Gastrocnemius medialis (tissue), 4 donors: ENCODE measurements at regions of chr6 and their contacts with region 1.

Region 1: DNA sequence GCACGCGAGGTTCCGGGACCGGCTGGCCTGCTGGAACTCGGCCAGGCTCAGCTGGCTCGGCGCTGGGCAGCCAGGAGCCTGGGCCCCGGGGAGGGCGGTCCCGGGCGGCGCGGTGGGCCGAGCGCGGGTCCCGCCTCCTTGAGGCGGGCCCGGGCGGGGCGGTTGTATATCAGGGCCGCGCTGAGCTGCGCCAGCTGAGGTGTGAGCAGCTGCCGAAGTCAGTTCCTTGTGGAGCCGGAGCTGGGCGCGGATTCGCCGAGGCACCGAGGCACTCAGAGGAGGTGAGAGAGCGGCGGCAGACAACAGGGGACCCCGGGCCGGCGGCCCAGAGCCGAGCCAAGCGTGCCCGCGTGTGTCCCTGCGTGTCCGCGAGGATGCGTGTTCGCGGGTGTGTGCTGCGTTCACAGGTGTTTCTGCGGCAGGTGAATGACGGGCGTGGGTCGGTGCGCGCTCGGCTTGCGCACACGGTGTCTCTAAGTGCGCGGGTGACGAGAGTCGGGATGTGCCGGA is at the start of gene CDKN1A:
- DNase-seq: peak; percentile 86 to 94
- ATAC-seq: peak; percentile 38 to 61
- H3K4me3 ChIP-seq: peak within 1 kb of the TSS; percentile 91 to 97 (median 93)
- H3K27ac ChIP-seq: peak within 1 kb of the TSS; percentile 99 to 100 (median 100)
- H3K4me1 ChIP-seq: peaks cover 26 to 37% of the 10 kb centered on the region in 2 donors
- H3K27me3 ChIP-seq: no peaks in the 10 kb centered on the region
- CTCF ChIP-seq: peak in 3 of 5 experiments; percentile 21 to 45 (median 28)
- POLR2A ChIP-seq: peak; percentile 99 to 100
- total RNA-seq, gene CDKN1A: 110 to 346 (median 260) TPM

Region 2: DNA sequence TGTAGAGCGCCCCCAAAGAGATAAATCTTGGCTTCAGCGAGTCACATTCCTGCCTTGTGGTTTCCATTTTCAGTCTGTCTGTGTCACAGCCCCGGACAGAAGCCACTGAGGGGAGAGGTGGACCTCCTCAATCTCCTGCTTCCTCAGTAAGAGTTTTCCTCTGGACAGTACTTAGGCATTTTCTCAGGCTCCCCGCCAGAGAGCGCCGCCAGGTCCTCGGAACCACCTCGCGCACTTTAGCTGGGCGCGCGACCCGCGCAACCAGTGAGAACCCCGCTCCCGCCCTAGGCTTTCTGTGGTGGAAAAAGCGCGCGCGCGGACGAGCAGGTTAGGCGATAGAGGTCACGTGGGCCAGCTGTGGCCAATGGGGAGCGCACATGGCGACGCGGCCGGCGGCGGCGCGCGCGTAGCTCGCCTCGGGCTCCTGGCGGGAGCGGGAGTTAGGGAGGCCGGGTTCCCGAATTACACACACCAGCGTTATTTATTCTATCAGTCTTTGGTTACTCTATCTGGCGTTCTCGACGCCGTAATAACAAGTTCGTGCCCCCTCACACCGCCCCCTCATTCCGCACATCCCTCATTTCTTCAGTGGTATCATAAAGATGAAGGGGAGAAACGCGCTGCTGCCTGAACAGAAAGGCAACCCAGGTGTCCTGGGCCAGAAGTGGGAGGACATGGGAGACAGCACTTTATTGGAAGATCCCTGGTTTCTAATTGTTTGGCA is 255.3 kb before region 1 on chr6:
- in situ Hi-C with region 1: loop called in 2 of 4 experiments (anchors 10 to 25 kb)
- intact Hi-C with region 1: loop called (anchors 5 kb)
- DNase-seq: peak; percentile 92 to 97
- ATAC-seq: peak; percentile 96 to 98
- H3K4me3 ChIP-seq: peak overlapping the region; percentile 55 to 66 (median 59)
- H3K27ac ChIP-seq: peak overlapping the region; percentile 78 to 82 (median 80)
- H3K4me1 ChIP-seq: peaks cover 6 to 7% of the 10 kb centered on the region in 2 donors
- H3K27me3 ChIP-seq: no peaks in the 10 kb centered on the region
- CTCF ChIP-seq: peak; percentile 26 to 67 (median 61)
- POLR2A ChIP-seq: peak; percentile 63 to 70

Region 3: GRCh38 chr6:36546920-36547645 is 131.5 kb before region 1 on chr6 and contains the start of gene STK38:
- in situ Hi-C with region 1: no loop called
- intact Hi-C with region 1: loop called (anchors 2 kb)
- DNase-seq: peak; percentile 85 to 87
- ATAC-seq: peak; percentile 92 to 97
- H3K4me3 ChIP-seq: peak within 1 kb of the TSS; percentile 76 to 97 (median 96)
- H3K27ac ChIP-seq: peak within 1 kb of the TSS; percentile 89 to 99 (median 98)
- H3K4me1 ChIP-seq: peaks cover 27 to 28% of the 10 kb centered on the region in 2 donors
- H3K27me3 ChIP-seq: no peaks in the 10 kb centered on the region
- CTCF ChIP-seq: peak in 2 of 5 experiments; percentile 4 to 21
- POLR2A ChIP-seq: peak; percentile 98
- total RNA-seq, gene STK38: 10.8 to 14.8 (median 12.7) TPM

Region 4: DNA sequence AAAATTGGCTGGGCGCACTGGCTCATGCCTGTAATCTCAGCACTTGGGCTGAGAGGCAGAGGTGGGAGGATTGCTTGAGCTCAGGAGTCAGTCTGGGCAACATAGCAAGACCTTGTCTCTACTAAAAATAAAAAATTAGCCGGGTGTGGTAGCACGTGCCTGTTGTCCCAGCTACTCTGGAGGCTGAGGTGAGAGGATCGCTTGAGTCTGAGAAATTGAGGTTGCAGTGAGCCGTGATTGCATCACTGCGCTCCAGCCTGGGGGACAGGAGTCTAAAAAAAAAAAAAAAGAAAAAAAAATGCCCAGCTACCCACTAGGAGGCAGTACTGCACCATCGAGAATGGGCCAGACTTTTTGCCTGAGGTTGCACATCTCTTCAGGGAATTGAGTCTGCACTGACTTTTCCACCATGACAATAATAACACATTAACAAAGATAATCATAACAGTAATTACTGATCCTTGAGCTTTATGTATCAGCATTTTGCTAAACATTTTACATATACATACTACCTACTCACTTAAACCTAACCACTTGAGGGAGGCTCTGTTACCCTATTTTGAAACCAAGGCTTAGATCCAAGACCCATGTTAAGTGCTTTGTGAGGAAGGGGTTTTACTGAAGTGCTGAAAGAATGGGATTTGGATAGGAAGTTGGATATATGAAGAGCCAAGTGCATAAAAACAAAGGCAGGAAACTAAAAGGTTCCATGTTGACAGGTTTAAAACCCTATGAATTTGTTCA is 63.4 kb before region 1 on chr6:
- in situ Hi-C with region 1: loop called (anchors 5 to 10 kb)
- intact Hi-C with region 1: loop called (anchors 1 kb)
- DNase-seq: peak; percentile 20 to 79
- ATAC-seq: peak; percentile 51 to 61
- H3K4me3 ChIP-seq: no peak overlapping the region
- H3K27ac ChIP-seq: peak overlapping the region; percentile 82 to 87 (median 86)
- H3K4me1 ChIP-seq: peaks cover 29 to 31% of the 10 kb centered on the region in 2 donors
- H3K27me3 ChIP-seq: no peaks in the 10 kb centered on the region
- CTCF ChIP-seq: peak; percentile 61 to 85 (median 69)
- POLR2A ChIP-seq: no peak

Region 5: DNA sequence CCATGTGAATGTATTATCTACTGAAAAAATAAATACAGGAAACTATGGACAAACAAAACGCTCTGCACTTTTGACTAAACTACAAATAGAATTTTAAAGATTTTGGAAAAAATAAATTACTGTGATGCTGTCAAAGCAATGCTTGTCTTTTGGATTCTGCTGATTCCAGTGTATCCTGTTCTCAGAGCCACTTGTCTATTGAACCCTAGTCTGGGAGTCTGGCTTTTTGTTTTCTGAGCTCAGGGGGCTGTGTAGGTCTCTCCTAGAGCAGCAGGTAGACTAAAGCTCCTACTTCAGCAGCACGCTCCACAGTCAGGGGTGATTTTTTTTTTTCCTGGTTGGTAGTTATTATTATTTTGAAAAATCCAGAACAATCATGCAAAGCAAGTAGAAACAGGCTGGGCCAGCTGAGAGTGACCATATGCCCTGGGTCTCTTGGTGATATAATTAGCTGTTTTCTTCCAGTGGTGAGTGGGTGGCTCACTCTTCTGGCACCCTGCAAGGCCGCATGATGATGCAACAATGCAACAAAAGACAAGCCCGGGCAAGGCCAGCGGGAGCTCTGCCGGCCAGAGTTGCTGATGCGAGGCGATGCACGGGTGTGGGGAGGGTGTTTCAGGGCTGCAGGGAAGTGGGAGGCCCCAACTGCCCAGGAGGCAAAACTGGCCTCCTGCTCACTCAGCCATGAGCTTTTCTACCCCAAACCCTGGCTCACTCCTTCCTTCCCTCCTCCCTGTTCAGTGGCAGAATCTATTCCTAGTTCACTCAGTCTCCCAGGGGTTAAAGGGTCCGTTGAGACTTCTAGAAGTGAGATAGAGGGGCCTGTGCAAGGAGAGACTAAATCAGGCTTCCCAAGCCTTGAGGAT is 11.6 kb before region 1 on chr6:
- in situ Hi-C with region 1: no loop called
- intact Hi-C with region 1: loop called (anchors 1 kb)
- DNase-seq: peak; percentile 81 to 91
- ATAC-seq: peak; percentile 97 to 98
- H3K4me3 ChIP-seq: no peak overlapping the region
- H3K27ac ChIP-seq: peak overlapping the region; percentile 50 to 74 (median 62)
- H3K4me1 ChIP-seq: peaks cover 13 to 17% of the 10 kb centered on the region in 2 donors
- H3K27me3 ChIP-seq: no peaks in the 10 kb centered on the region
- CTCF ChIP-seq: no peak
- POLR2A ChIP-seq: peak in 1 of 2 donors; percentile 22

Region 6: GRCh38 chr6:36851149-36851614 is 172.6 kb after region 1 on chr6:
- in situ Hi-C with region 1: no loop called
- intact Hi-C with region 1: loop called (anchors 5 kb)
- DNase-seq: peak in 1 of 2 donors; percentile 54
- ATAC-seq: peak; percentile 37 to 46
- H3K4me3 ChIP-seq: no peak overlapping the region
- H3K27ac ChIP-seq: no peak overlapping the region
- H3K4me1 ChIP-seq: peaks cover 29 to 34% of the 10 kb centered on the region in 2 donors
- H3K27me3 ChIP-seq: no peaks in the 10 kb centered on the region
- CTCF ChIP-seq: peak; percentile 69 to 79 (median 73)
- POLR2A ChIP-seq: no peak

Region 7: DNA sequence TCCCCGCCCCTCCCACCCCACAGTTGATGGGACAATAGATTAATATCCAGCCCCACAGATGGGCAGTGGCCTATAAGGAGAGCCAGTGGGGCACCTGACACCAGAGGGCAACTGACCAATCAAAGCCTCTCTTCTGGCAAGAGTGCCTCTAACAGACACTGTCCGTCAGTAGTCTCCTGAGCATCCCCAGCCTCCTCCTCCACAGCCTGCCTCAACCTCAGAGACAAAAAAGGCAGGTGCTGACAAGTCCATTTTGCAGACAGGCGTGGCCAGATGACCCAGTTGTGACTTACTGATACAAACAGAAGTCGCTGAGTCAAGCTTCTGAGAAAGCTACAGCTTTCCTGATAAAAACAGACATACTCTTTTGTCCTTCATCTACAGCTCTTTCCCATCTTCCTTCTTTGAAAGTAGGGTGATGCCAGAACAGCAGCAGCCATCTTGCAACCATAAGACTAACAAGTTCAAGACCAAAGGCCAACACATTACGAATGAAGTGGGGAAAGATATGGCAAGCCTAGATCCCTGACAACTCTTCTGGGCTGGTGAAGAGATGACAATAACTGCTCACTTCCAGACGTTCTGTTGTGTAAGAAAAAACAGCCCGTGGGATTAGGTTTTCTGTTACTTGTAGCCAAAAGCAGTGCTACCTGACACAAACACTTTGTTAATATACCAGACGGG is 183.7 kb after region 1 on chr6:
- in situ Hi-C with region 1: no loop called
- intact Hi-C with region 1: no loop called
- DNase-seq: no peak
- ATAC-seq: no peak
- H3K4me3 ChIP-seq: no peak overlapping the region
- H3K27ac ChIP-seq: no peak overlapping the region
- H3K4me1 ChIP-seq: no peaks in the 10 kb centered on the region
- H3K27me3 ChIP-seq: no peaks in the 10 kb centered on the region
- CTCF ChIP-seq: no peak
- POLR2A ChIP-seq: no peak